Activated B cell treated with CpG ODN at 0.5 μM for 24 hours (primary cell): ENCODE measurements at regions of chr16 and their contacts with region 1.

Region 1: DNA sequence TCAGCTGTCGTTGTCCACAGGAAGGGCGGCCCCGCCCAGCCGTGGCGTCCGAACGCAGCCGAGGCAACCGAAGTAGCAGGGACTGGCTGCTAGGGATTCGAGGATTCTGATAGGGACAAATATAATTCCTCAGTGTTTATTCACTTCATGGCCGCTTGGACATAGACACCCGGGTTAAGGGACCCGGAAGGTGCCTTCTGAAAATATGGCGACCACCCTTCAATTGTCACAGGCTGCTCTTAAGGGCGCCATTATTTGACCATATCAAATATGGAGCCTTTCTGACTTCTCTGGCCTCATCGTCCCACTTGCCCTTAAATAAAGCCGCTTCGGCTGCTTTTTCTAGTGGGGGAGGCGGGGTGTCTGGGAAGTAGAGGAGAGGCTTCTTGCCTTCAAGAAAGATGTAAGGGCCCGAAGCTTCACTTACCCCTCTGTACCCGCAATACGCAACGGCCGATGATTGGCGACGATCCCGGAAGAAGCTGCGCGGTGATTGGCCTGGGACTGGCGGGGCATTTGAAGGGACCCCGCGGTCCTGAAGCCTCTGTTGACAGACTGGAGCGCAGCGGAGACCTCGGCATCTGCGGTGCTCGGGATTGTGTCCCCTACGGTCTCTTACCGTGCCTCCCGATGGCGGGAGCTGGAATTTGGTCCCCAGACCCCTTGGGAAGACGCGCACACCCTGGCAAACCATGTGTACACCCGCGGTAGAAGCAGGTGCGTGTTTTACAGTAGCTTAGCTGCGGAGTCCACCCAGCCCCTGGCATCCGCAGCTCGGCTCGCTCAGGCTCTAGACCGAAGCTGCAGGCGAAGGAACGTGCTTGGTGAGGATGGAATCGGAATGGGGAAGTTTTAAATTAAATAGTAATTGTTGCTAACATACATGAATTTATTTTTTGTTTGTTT is at the start of gene ZNF688:
- DNase-seq: peak; percentile 78
- ATAC-seq: peak; percentile 86
- H3K4me3 Mint-ChIP-seq: peak within 1 kb of the TSS; percentile 89
- H3K27ac Mint-ChIP-seq: peak within 1 kb of the TSS; percentile 96
- H3K4me1 Mint-ChIP-seq: peaks cover 41% of the 10 kb centered on the region
- H3K27me3 Mint-ChIP-seq: no peaks in the 10 kb centered on the region
- CTCF ChIP-seq: no peak
- total RNA-seq, gene ZNF688: 13.9 and 14.7 TPM in 2 replicates

Region 2: DNA sequence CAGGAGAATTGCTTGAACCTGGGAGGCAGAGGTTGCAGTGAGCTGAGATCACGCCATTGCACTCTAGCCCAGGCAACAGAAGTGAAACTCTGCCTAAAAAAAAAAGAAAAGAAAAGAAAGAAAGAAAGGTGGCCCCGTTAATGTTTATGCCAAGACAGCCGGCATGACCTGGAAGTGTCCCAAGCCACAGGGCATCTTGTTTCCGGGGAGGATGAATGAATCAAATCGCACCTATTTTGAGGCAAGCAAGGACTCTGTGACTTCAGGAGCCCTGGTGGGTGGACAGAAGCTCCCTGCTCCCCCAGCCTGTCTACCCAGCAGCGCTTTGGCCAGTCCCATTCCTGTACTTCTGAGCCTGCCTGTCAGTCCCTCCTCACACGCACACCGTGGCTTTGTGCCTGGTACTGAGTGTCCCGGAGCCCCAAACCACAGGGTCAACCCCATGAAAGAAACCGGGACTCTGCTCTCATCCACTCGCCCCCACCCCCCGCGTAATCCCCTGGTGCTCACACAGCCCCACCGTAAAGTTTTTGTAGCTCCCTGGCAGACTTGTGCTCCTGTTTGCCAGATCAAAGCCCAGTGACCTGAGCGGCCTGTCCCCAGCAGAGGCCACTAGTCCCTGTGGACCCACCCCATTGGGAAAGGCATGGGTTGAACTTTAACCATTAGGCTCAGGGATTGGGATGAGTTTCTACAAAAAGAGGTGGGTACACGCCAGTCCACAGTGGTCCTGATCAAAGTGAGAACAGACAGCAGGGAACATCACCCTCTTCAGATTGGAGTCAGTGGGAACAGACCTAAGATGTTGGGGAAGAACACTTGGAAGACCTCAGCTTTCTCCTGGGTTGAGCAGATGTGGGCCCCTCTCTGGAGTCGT is 236.1 kb before region 1 on chr16:
- CTCF ChIA-PET with region 1: no interaction called
- POLR2A ChIA-PET with region 1: interaction called, 10 read pairs
- intact Hi-C with region 1: no loop called
- DNase-seq: no peak
- ATAC-seq: no peak
- H3K4me3 Mint-ChIP-seq: peak overlapping the region; percentile 82
- H3K27ac Mint-ChIP-seq: peak overlapping the region; percentile 83
- H3K4me1 Mint-ChIP-seq: peaks cover 42% of the 10 kb centered on the region
- H3K27me3 Mint-ChIP-seq: no peaks in the 10 kb centered on the region
- CTCF ChIP-seq: no peak

Region 3: DNA sequence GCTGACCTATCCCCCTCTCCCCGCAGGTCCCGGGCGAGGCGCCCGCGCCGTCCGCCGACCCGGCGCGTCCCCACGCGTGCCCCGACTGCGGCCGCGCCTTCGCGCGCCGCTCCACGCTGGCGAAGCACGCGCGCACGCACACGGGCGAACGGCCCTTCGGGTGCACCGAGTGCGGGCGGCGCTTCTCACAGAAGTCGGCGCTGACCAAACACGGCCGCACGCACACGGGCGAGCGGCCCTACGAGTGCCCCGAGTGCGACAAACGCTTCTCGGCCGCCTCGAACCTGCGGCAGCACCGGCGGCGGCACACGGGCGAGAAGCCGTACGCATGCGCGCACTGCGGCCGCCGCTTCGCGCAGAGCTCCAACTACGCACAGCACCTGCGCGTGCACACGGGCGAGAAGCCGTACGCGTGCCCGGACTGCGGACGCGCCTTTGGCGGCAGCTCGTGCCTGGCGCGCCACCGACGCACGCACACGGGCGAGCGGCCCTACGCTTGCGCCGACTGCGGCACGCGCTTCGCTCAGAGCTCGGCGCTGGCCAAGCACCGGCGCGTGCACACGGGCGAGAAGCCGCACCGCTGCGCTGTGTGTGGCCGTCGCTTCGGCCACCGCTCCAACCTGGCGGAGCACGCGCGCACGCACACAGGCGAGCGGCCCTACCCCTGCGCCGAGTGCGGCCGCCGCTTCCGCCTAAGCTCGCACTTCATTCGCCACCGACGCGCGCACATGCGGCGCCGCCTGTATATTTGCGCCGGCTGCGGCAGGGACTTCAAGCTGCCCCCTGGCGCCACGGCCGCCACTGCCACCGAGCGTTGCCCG is 154.2 kb before region 1 on chr16:
- CTCF ChIA-PET with region 1: no interaction called
- POLR2A ChIA-PET with region 1: interaction called, 14 read pairs
- intact Hi-C with region 1: no loop called
- DNase-seq: peak; percentile 84
- ATAC-seq: peak; percentile 86
- H3K4me3 Mint-ChIP-seq: peak overlapping the region; percentile 71
- H3K27ac Mint-ChIP-seq: peak overlapping the region; percentile 69
- H3K4me1 Mint-ChIP-seq: peaks cover 12% of the 10 kb centered on the region
- H3K27me3 Mint-ChIP-seq: no peaks in the 10 kb centered on the region
- CTCF ChIP-seq: no peak

Region 4: GRCh38 chr16:30534368-30535105 is 37.4 kb before region 1 on chr16 and contains the start of gene ZNF747:
- CTCF ChIA-PET with region 1: interaction called, 3 read pairs
- POLR2A ChIA-PET with region 1: interaction called, 67 read pairs
- intact Hi-C with region 1: loop called (anchors 1 kb)
- DNase-seq: peak; percentile 85
- ATAC-seq: peak; percentile 83
- H3K4me3 Mint-ChIP-seq: peak within 1 kb of the TSS; percentile 96
- H3K27ac Mint-ChIP-seq: peak within 1 kb of the TSS; percentile 97
- H3K4me1 Mint-ChIP-seq: peaks cover 23% of the 10 kb centered on the region
- H3K27me3 Mint-ChIP-seq: no peaks in the 10 kb centered on the region
- CTCF ChIP-seq: no peak
- total RNA-seq, gene ZNF747: 16.3 and 21.6 TPM in 2 replicates

Region 5: DNA sequence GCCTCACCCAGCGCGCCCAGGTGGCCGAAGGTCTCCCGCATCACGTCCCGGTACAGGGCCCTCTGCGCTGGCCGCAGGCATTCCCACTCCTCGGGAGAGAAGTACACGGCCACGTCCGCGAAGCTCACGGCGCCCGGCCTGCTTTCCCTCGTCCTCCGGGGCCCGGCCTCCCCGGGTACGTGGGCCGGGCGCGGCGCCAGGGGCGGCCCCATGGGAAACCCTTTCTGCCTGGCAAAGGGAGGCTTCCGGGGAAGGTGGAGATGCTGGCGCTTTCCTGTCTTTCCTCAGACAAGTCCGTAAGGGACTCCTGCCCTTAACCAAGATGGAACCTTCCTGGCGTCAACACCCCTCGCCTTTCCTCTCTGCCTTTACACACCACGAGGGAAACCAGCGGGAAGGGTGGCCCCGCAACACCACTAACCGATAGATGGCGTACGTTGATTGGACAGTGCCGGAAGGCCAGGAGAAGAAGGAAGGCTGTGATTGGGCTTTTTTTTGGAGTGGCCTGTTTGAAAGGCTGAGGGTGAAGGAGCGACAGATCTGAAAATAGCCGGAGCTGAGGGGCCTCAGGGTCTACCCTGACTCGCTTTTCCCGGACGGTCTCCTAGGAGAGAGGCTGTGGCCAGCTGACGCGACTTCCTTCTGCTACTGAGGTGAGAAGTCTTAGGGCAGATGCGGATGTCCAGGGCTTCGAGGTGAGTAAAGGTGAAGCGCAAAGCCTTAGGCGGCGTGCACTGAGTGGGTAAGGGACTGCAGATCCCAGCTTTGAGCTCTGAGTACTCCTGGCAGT is 13.6 kb after region 1 on chr16 and contains the start of gene ZNF785:
- CTCF ChIA-PET with region 1: no interaction called
- POLR2A ChIA-PET with region 1: interaction called, 35 read pairs
- intact Hi-C with region 1: loop called (anchors 1 kb)
- DNase-seq: peak; percentile 76
- ATAC-seq: peak; percentile 99
- H3K4me3 Mint-ChIP-seq: peak within 1 kb of the TSS; percentile 85
- H3K27ac Mint-ChIP-seq: peak within 1 kb of the TSS; percentile 79
- H3K4me1 Mint-ChIP-seq: peaks cover 19% of the 10 kb centered on the region
- H3K27me3 Mint-ChIP-seq: no peaks in the 10 kb centered on the region
- CTCF ChIP-seq: no peak
- total RNA-seq, gene ZNF785: 20.0 and 22.8 TPM in 2 replicates

Region 6: DNA sequence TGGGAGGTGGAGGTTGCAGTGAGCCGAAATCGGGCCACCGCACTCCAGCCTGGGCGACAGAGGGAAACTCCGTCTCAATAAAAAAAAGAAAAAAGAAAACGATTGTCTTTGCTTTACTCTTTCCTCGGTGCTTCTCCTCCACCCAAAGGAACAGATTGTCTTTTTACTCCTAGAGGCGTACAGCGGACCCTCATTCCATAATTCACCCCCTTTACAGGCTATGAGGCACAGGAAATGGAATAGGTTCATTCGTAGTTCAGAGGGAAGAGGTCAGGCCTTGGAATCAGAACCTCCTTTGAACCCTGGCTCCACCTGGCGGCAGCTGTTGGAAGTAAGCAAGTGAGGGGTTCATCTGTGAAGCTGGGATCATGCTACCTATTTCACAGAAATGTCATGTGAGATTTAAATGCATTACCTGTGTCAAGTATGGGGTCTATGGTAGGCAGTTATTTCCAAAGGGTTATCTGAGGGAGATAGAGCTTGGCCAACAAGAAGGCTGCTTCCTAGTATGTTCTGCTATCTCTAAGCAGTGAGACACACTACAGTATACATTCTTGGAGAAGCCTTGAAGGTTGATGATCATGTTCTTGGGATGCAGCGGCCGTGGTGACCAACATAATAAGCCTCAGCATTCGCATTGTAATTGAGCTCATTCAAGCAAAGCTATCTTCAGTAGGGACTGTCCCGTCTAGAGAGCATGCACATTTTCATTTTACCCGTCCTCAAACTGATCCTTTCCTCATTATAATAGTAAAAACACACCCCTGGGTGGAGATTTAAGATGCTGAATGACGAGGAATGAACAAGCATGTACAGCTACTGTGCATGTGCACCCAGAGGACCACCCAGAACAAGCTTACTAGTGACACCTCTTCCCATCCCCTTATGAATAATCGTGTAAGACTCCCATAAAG is 56.9 kb after region 1 on chr16:
- CTCF ChIA-PET with region 1: interaction called, 3 read pairs
- POLR2A ChIA-PET with region 1: interaction called, 11 read pairs
- intact Hi-C with region 1: loop called (anchors 1 kb)
- DNase-seq: peak; percentile 84
- ATAC-seq: peak; percentile 93
- H3K4me3 Mint-ChIP-seq: peak overlapping the region; percentile 69
- H3K27ac Mint-ChIP-seq: peak overlapping the region; percentile 76
- H3K4me1 Mint-ChIP-seq: peaks cover 6% of the 10 kb centered on the region
- H3K27me3 Mint-ChIP-seq: no peaks in the 10 kb centered on the region
- CTCF ChIP-seq: peak; percentile 70

Region 7: GRCh38 chr16:30677931-30678585 is 106.1 kb after region 1 on chr16:
- CTCF ChIA-PET with region 1: no interaction called
- POLR2A ChIA-PET with region 1: no interaction called
- intact Hi-C with region 1: no loop called
- DNase-seq: no peak
- ATAC-seq: no peak
- H3K4me3 Mint-ChIP-seq: no peak overlapping the region
- H3K27ac Mint-ChIP-seq: no peak overlapping the region
- H3K4me1 Mint-ChIP-seq: peaks cover 2% of the 10 kb centered on the region
- H3K27me3 Mint-ChIP-seq: no peaks in the 10 kb centered on the region
- CTCF ChIP-seq: no peak